ENCODE measurements at regions of chr1 and their contacts with region 1.

Region 1: DNA sequence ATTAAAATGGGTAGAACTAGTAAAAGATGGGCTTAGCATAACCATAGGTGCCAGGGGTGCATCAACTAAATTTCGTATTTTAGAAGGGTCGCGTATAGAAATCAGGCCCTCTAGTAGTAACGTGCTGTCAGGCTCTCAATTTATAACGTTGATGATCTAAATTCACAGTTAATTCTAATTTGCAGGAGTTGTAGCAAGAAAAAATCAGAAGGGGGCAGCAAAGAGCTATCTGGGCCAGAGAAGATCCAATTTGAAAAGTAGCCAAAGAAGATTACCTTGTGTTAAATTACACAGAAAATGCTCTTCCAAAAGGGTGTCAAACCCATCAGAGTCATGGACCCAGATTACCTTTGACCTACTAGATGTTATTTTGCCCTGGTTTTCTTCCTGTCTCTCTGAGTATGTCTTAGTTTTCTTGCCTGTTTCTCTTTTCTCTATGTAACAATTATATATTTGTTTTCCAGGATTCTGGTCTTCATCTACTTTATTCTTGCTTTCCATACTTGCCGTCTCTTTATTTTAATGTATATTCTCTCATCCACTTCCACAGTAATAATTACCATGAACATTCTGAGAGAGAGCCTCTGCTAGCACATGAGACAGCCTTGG is 1030.9 kb downstream of the AMY1C start:
- DNase-seq: peak in 1 of 2 experiments; percentile 13
- H3K4me3 ChIP-seq: no peak overlapping the region
- H3K4me3 Mint-ChIP-seq: no peak overlapping the region
- H3K27ac Mint-ChIP-seq: no peak overlapping the region
- H3K4me1 ChIP-seq: no peaks in the 10 kb centered on the region
- H3K4me1 Mint-ChIP-seq: no peaks in the 10 kb centered on the region
- H3K27me3 ChIP-seq: no peaks in the 10 kb centered on the region
- H3K27me3 Mint-ChIP-seq: no peaks in the 10 kb centered on the region
- CTCF ChIP-seq: peak; percentile 43 to 58

Region 2: GRCh38 chr1:104648269-104648691 is 132.3 kb before region 1 on chr1:
- CTCF ChIA-PET with region 1: no interaction called
- POLR2A ChIA-PET with region 1: no interaction called
- intact Hi-C with region 1: no loop called
- DNase-seq: peak in 1 of 2 experiments; percentile 11
- H3K4me3 ChIP-seq: no peak overlapping the region
- H3K4me3 Mint-ChIP-seq: no peak overlapping the region
- H3K27ac Mint-ChIP-seq: no peak overlapping the region
- H3K4me1 ChIP-seq: no peaks in the 10 kb centered on the region
- H3K4me1 Mint-ChIP-seq: no peaks in the 10 kb centered on the region
- H3K27me3 ChIP-seq: no peaks in the 10 kb centered on the region
- H3K27me3 Mint-ChIP-seq: no peaks in the 10 kb centered on the region
- CTCF ChIP-seq: peak; percentile 35 to 38

Region 3: DNA sequence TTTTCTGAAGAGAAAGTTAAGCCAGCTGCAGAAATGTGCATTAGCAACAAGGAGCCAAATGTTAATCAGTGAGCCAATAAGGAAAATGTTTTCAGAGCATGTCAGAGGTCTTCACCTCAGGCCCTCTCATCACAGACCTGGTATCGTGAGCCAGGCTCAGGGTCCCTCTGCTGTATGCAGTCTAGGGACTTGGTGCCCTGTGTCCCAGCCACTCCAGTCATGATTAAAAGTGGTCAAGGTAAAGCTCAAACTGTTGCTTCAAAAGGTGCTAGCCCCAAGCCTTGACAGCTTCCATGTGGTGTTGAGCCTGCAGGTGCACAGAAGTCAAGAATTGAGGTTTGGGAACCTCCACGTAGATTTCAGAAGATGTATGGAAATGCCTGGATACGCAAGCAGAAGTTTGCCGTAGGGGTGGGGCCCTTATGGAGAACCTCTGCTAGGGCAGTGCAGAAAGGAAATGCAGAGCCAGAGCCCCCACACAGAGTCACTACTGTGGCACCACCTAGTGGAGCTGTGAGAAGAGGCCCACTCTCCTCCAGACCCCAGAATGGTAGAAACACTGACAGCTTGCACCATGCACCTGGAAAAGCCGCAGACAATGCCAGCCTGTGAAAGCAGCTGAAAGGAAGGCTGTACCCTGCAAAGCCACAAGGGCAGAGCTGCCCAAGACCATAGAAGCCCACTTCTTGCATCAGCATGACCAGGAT is 97.8 kb after region 1 on chr1:
- CTCF ChIA-PET with region 1: no interaction called
- POLR2A ChIA-PET with region 1: no interaction called
- intact Hi-C with region 1: loop called (anchors 2 kb)
- DNase-seq: peak in 1 of 2 experiments; percentile 5
- H3K4me3 ChIP-seq: no peak overlapping the region
- H3K4me3 Mint-ChIP-seq: no peak overlapping the region
- H3K27ac Mint-ChIP-seq: no peak overlapping the region
- H3K4me1 ChIP-seq: no peaks in the 10 kb centered on the region
- H3K4me1 Mint-ChIP-seq: no peaks in the 10 kb centered on the region
- H3K27me3 ChIP-seq: no peaks in the 10 kb centered on the region
- H3K27me3 Mint-ChIP-seq: no peaks in the 10 kb centered on the region
- CTCF ChIP-seq: no peak

Region 4: GRCh38 chr1:105608713-105609112 is 828.1 kb after region 1 on chr1:
- CTCF ChIA-PET with region 1: no interaction called
- POLR2A ChIA-PET with region 1: no interaction called
- intact Hi-C with region 1: loop called (anchors 10 kb)
- DNase-seq: no peak
- H3K4me3 ChIP-seq: no peak overlapping the region
- H3K4me3 Mint-ChIP-seq: no peak overlapping the region
- H3K27ac Mint-ChIP-seq: no peak overlapping the region
- H3K4me1 ChIP-seq: no peaks in the 10 kb centered on the region
- H3K4me1 Mint-ChIP-seq: no peaks in the 10 kb centered on the region
- H3K27me3 ChIP-seq: no peaks in the 10 kb centered on the region
- H3K27me3 Mint-ChIP-seq: no peaks in the 10 kb centered on the region
- CTCF ChIP-seq: no peak

Region 5: GRCh38 chr1:105793536-105794146 is 1013.1 kb after region 1 on chr1:
- CTCF ChIA-PET with region 1: no interaction called
- POLR2A ChIA-PET with region 1: no interaction called
- intact Hi-C with region 1: loop called (anchors 2 kb)
- DNase-seq: peak; percentile 32 to 36
- H3K4me3 ChIP-seq: no peak overlapping the region
- H3K4me3 Mint-ChIP-seq: no peak overlapping the region
- H3K27ac Mint-ChIP-seq: no peak overlapping the region
- H3K4me1 ChIP-seq: no peaks in the 10 kb centered on the region
- H3K4me1 Mint-ChIP-seq: no peaks in the 10 kb centered on the region
- H3K27me3 ChIP-seq: no peaks in the 10 kb centered on the region
- H3K27me3 Mint-ChIP-seq: no peaks in the 10 kb centered on the region
- CTCF ChIP-seq: peak; percentile 48 to 57

Measured in Caco-2 (cell line).